Activated CD4-positive, alpha-beta memory T cell treated with anti-CD3 and anti-CD28 coated beads, Interleukin-2, amount 10 ng/mL, durations not matched to agents 7 days and 5 days (primary cell): ENCODE measurements at regions of chr14 and their contacts with region 1.

Region 1: GRCh38 chr14:72476657-72477499 is 417.0 kb downstream of the DPF3 start:
- DNase-seq: peak; percentile 89
- H3K4me3 Mint-ChIP-seq: peak overlapping the region; percentile 60
- H3K27ac Mint-ChIP-seq: peak overlapping the region; percentile 99
- H3K4me1 Mint-ChIP-seq: peaks cover 80% of the 10 kb centered on the region
- H3K27me3 Mint-ChIP-seq: no peaks in the 10 kb centered on the region

Region 2: DNA sequence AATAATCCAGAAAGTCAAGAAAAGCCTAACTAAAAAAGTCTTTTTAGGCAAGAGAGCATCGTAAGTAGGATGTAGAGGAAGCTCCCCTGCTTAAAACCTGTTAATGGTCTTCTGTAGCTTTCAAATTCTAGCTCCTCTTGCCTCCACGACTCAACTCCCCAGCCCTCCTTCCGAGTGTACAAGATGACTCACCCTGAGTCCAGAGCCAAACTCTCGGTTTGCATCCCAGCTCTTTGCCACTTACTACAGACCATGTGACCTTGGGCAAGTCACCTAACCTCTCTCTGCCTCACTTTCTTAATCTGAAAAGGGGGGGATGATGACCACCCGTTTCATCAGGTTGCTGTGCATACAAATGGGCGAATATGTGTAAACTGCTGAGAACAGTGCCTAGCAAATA is 43.4 kb before region 1 on chr14:
- CTCF ChIA-PET with region 1: interaction called, 40 read pairs
- POLR2A ChIA-PET with region 1: interaction called, 210 read pairs
- DNase-seq: no peak
- H3K4me3 Mint-ChIP-seq: no peak overlapping the region
- H3K27ac Mint-ChIP-seq: no peak overlapping the region
- H3K4me1 Mint-ChIP-seq: peaks cover 53% of the 10 kb centered on the region
- H3K27me3 Mint-ChIP-seq: peaks cover 5% of the 10 kb centered on the region

Region 3: GRCh38 chr14:72443991-72444441 is 32.9 kb before region 1 on chr14:
- CTCF ChIA-PET with region 1: interaction called, 40 read pairs
- POLR2A ChIA-PET with region 1: interaction called, 210 read pairs
- DNase-seq: peak; percentile 76
- H3K4me3 Mint-ChIP-seq: peak overlapping the region; percentile 12
- H3K27ac Mint-ChIP-seq: peak overlapping the region; percentile 84
- H3K4me1 Mint-ChIP-seq: peaks cover 89% of the 10 kb centered on the region
- H3K27me3 Mint-ChIP-seq: no peaks in the 10 kb centered on the region

Region 4: GRCh38 chr14:72451054-72451972 is 25.6 kb before region 1 on chr14:
- CTCF ChIA-PET with region 1: interaction called, 11 read pairs
- POLR2A ChIA-PET with region 1: interaction called, 210 read pairs
- DNase-seq: peak; percentile 73
- H3K4me3 Mint-ChIP-seq: peak overlapping the region; percentile 6
- H3K27ac Mint-ChIP-seq: peak overlapping the region; percentile 91
- H3K4me1 Mint-ChIP-seq: peaks cover 70% of the 10 kb centered on the region
- H3K27me3 Mint-ChIP-seq: no peaks in the 10 kb centered on the region

Region 5: DNA sequence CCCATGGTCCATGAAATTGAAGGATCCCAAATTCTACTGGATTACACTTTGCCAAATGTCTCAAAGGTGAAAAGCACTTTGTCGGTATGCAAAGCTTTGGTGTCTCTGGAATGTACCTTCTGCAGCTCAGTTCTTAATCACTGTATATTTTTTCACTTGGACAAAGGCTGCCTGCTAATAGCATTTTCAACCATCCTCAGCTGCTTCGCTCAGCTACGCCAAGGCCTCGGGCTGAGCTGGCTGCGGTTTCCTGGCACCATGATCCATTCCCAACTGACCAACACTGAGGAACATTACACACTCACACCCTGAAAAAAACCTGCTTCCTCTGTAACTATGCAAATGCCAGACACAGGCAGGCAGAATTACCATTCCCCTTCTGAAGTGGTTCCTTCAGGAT is 81.8 kb after region 1 on chr14:
- CTCF ChIA-PET with region 1: no interaction called
- POLR2A ChIA-PET with region 1: no interaction called
- DNase-seq: no peak
- H3K4me3 Mint-ChIP-seq: no peak overlapping the region
- H3K27ac Mint-ChIP-seq: no peak overlapping the region
- H3K4me1 Mint-ChIP-seq: peaks cover 12% of the 10 kb centered on the region
- H3K27me3 Mint-ChIP-seq: peaks cover 41% of the 10 kb centered on the region

Region 6: GRCh38 chr14:72893636-72894321 is 416.9 kb after region 1 on chr14 and contains the start of gene DPF3:
- CTCF ChIA-PET with region 1: interaction called, 12 read pairs
- POLR2A ChIA-PET with region 1: interaction called, 15 read pairs
- DNase-seq: peak; percentile 98
- H3K4me3 Mint-ChIP-seq: peak within 1 kb of the TSS; percentile 92
- H3K27ac Mint-ChIP-seq: peak within 1 kb of the TSS; percentile 41
- H3K4me1 Mint-ChIP-seq: peaks cover 35% of the 10 kb centered on the region
- H3K27me3 Mint-ChIP-seq: peaks cover 61% of the 10 kb centered on the region
- total RNA-seq, gene DPF3: 14.9 to 15.4 TPM